ENCODE measurements at regions of chr1 and their contacts with region 1.

Region 1: DNA sequence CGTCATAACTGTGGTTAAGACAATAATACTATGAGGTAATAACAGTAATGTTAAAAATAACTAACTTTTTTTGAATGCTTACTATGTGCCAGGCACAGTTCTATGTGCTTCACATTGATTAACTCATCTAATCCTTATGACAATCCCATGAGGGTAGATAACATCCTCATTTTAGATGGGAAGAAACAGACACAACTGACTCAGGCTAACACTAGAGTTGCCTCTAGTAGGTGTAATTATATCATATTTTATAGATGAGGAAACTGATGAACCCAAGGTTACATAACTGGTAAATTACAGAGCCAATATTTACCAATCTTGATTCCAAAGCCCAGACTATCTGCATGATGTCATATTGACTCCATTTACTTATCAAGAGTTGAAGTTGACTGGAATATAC is 23.5 kb downstream of the SERPINC1 start:
- DNase-seq: no peak
- ATAC-seq: no peak
- H3K4me3 ChIP-seq: no peak overlapping the region
- H3K27ac ChIP-seq: no peak overlapping the region
- H3K4me1 ChIP-seq: no peaks in the 10 kb centered on the region
- H3K27me3 ChIP-seq: no peaks in the 10 kb centered on the region

Region 2: GRCh38 chr1:173301507-173301906 is 592.1 kb before region 1 on chr1:
- intact Hi-C with region 1: loop called in 1 of 2 experiments (anchors 10 kb)
- DNase-seq: no peak
- ATAC-seq: no peak
- H3K4me3 ChIP-seq: no peak overlapping the region
- H3K27ac ChIP-seq: no peak overlapping the region
- H3K4me1 ChIP-seq: no peaks in the 10 kb centered on the region
- H3K27me3 ChIP-seq: no peaks in the 10 kb centered on the region

Region 3: DNA sequence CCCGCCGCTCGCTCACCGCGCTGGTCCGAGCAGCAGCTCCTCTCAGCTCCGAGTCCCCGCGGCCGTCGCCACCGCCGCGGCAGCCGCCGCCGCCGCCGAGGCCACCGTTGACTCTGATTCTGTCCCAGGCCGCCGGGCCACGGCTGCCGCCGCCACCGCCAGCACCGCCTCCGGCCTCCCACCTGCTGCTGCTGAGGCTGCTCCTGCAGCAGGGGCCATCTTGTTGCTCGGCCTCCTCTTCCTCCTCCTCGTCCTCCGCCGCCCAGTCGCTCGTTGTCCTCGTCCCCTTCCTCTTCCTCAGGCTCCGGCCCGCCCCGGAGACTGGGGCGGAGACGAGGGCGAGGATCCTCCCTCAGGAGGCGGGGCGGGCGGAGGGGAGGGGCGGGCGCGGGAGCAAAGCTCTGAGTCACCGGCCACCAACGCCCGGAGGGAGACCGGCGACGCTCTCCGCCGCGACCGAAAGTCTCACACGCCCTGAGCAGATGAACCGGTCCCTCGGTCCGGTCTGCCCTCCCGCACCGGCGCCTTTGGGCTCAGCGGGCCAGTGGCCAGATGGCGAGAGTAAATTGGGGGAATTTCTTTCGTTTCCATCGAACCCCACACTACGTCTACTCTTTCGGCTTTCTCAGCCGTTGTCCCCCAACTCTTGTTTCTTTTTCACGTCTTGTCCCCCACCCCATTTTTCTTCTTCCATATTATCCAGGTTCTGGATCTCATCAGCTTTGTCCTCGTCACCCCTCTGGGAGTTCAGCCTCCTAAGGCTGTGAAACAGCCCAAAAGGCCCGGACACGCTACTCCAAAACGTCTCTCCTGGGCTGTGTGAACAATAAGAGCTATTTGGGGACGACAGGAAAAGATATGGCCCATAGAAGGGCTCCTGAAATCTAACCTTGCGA is 128.7 kb after region 1 on chr1 and contains the start of gene RC3H1:
- intact Hi-C with region 1: no loop called
- DNase-seq: peak; percentile 93 to 97
- ATAC-seq: peak; percentile 98
- H3K4me3 ChIP-seq: peak within 1 kb of the TSS; percentile 66 to 85
- H3K27ac ChIP-seq: peak within 1 kb of the TSS; percentile 92 to 97
- H3K4me1 ChIP-seq: peaks cover 2 to 4% of the 10 kb centered on the region in 2 donors
- H3K27me3 ChIP-seq: no peaks in the 10 kb centered on the region
- total RNA-seq, gene RC3H1: 33.9 to 51.7 TPM

Region 4: DNA sequence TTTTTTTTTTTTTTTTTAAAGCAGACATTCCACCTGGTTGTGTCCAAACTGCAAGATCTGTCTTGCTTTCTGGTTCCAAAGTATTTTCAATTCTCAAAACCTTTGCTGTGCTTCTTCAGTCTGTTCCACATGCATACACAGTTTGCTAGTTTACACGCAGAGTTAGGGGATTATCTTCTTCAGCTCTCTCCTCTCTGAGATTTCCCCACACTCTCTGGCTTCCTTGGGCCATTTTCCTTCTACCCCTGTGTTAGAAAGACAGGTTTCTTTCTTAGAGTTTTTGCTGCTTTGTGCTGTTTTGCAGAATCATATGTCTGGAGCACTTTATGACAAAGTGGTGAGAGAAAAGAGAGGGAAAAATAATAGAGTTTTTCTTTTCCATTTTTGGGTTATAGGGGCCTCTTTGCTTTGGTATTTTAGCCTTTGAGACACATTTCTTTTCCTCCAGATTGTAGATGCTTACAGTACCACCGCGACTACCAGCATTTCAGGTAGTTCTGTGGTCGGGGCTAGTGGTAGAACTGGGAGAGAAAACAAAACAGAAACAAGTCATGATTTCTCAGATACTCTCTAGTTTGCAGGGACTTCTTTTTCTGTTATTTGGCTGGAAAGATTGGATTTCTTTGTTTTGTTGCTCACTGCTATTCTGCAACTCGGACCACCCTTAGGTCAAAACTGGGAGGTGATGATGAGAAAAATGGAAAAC is 332.0 kb after region 1 on chr1:
- intact Hi-C with region 1: no loop called
- DNase-seq: no peak
- ATAC-seq: no peak
- H3K4me3 ChIP-seq: no peak overlapping the region
- H3K27ac ChIP-seq: no peak overlapping the region
- H3K4me1 ChIP-seq: no peaks in the 10 kb centered on the region
- H3K27me3 ChIP-seq: no peaks in the 10 kb centered on the region